A673 (cell line): ENCODE measurements at regions of chr7 and their contacts with region 1.

Region 1: DNA sequence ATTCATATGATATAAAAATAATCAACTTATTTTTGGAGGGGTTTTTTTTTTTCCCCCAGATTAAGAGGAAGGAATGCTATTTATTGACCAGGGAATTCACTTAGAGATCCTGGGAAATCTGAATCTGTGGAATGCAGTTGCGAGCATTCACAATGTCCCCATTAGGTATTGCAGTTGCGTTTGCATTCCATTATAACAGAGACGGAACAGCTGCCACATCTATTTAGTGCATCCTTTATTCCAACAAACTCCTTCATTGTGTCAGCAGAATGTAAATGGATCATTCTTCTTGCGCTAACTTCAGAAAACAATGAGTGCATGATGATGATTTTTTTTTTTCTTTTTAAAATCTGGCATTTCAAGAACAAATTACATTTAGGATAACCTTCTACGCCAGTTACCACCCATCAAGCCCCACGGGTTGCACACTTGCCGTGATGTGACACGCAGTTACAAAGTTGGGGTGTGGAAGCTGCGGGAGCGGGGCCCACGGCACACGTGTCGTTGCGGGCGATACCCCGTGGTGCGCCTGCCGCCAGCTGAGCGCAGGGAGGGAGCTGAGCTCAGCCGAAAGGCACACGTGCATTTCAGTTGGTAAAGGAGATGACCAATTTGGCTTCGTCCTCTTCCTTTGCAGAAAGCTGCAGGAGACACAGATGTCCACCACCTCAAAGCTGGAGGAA is 175.5 kb upstream of the SH2B2 start:
- DNase-seq: no peak
- H3K4me3 ChIP-seq: no peak overlapping the region
- H3K27ac ChIP-seq: no peak overlapping the region
- H3K4me1 ChIP-seq: no peaks in the 10 kb centered on the region
- H3K27me3 ChIP-seq: no peaks in the 10 kb centered on the region
- CTCF ChIP-seq: no peak

Region 2: GRCh38 chr7:101856473-101857357 is 254.5 kb before region 1 on chr7:
- CTCF ChIA-PET with region 1: no interaction called
- POLR2A ChIA-PET with region 1: no interaction called
- intact Hi-C with region 1: no loop called
- DNase-seq: no peak
- H3K4me3 ChIP-seq: no peak overlapping the region
- H3K27ac ChIP-seq: no peak overlapping the region
- H3K4me1 ChIP-seq: peaks cover 42% of the 10 kb centered on the region
- H3K27me3 ChIP-seq: no peaks in the 10 kb centered on the region
- CTCF ChIP-seq: no peak

Region 3: DNA sequence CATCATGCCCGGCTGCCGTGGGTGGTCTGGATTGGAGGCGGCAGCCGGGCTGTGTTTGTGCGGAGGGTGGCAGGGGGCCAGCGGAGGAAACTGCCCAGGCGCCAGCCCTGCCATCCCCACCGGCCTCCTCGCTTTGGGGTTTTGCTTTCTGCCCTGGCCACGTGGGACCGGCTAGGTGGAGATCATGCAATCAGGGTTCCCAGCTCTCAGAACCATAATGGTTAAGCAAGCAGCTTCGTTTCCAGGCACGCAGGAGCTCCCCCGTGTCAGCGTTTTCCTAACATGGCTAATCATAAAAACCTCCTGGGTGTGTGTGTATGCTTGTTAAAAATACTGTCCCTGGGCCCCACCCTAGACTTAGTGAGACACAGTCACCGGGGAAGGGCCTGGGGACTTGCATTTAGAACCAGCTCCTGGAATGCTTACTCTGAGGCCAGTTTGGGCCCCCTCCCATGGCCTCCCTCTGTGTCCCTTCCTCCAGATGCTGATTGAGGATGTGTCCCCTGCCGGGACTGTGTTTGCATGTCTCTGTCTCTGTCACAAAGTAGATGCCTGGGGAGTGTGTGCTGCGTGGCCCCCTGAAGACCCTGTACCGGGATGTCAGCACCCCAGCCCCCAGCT is 174.5 kb before region 1 on chr7:
- CTCF ChIA-PET with region 1: no interaction called
- POLR2A ChIA-PET with region 1: no interaction called
- intact Hi-C with region 1: no loop called
- DNase-seq: peak; percentile 85
- H3K4me3 ChIP-seq: peak overlapping the region; percentile 33
- H3K27ac ChIP-seq: peak overlapping the region; percentile 13
- H3K4me1 ChIP-seq: peaks cover 30% of the 10 kb centered on the region
- H3K27me3 ChIP-seq: no peaks in the 10 kb centered on the region
- CTCF ChIP-seq: no peak

Region 4: GRCh38 chr7:102912742-102913141 is 801.5 kb after region 1 on chr7 and contains the start of gene LRRC17:
- CTCF ChIA-PET with region 1: no interaction called
- POLR2A ChIA-PET with region 1: interaction called, 17 read pairs
- intact Hi-C with region 1: no loop called
- DNase-seq: peak; percentile 95
- H3K4me3 ChIP-seq: peak within 1 kb of the TSS; percentile 46
- H3K27ac ChIP-seq: peak within 1 kb of the TSS; percentile 52
- H3K4me1 ChIP-seq: peaks cover 32% of the 10 kb centered on the region
- H3K27me3 ChIP-seq: no peaks in the 10 kb centered on the region
- CTCF ChIP-seq: no peak
- total RNA-seq, gene LRRC17: 9.2 and 10.0 TPM in 2 replicates